ENCODE measurements at regions of chr7 and their contacts with region 1.

Region 1: GRCh38 chr7:99881370-99881769 is 4.5 kb upstream of the OR2AE1 start:
- DNase-seq: no peak
- H3K4me3 ChIP-seq: no peak overlapping the region
- CTCF ChIP-seq: no peak

Region 2: GRCh38 chr7:99949638-99950228 is 68.4 kb after region 1 on chr7:
- in situ Hi-C with region 1: loop called (anchors 5 kb)
- DNase-seq: no peak
- H3K4me3 ChIP-seq: no peak overlapping the region
- CTCF ChIP-seq: peak; percentile 41

Measured in astrocyte of the cerebellum (primary cell).